Activated CD4-positive, alpha-beta T cell treated with anti-CD3 and anti-CD28 coated beads for 36 hours (primary cell): ENCODE measurements at regions of chr2 and their contacts with region 1.

Region 1: GRCh38 chr2:42132966-42133641 is 36.0 kb upstream of the EML4 start:
- DNase-seq: peak; percentile 92
- ATAC-seq: peak; percentile 90
- H3K4me3 Mint-ChIP-seq: peak overlapping the region; percentile 62
- H3K27ac Mint-ChIP-seq: peak overlapping the region; percentile 92
- H3K4me1 Mint-ChIP-seq: peaks cover 82% of the 10 kb centered on the region
- H3K27me3 Mint-ChIP-seq: no peaks in the 10 kb centered on the region

Region 2: GRCh38 chr2:41896186-41896846 is 236.8 kb before region 1 on chr2:
- CTCF ChIA-PET with region 1: no interaction called
- POLR2A ChIA-PET with region 1: no interaction called
- intact Hi-C with region 1: no loop called
- DNase-seq: peak; percentile 17
- ATAC-seq: peak; percentile 33
- H3K4me3 Mint-ChIP-seq: no peak overlapping the region
- H3K27ac Mint-ChIP-seq: no peak overlapping the region
- H3K4me1 Mint-ChIP-seq: no peaks in the 10 kb centered on the region
- H3K27me3 Mint-ChIP-seq: no peaks in the 10 kb centered on the region

Region 3: DNA sequence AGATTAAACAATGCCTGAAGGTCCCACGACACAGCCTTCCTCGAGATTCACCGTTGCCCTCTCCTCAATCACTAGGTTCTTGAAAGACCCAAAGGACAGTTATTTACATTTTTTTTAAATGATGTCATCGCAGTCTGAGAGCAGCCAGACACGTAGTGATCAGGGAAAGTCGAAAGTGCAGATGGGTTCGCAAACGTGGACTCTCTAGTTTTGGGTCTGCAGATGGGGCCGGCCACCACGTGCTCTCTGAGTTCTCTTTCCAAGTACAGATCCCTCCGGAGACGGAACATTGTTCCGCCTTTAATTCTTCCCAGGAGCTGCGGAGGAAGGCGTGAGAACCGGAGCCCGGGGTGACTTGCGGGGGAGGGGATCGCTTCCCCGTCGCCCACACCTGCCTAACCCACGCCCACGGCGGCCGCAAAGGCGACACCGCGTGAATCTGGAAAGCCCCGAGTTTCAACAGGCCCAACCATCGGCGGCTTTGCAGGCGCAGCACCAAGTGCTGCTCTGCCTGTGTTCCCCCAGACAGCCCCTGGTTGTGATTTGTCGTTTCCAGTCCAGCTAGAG is 31.0 kb before region 1 on chr2:
- CTCF ChIA-PET with region 1: interaction called, 10 read pairs
- POLR2A ChIA-PET with region 1: interaction called, 12 read pairs
- intact Hi-C with region 1: loop called (anchors 1 kb)
- DNase-seq: peak; percentile 89
- ATAC-seq: peak; percentile 40
- H3K4me3 Mint-ChIP-seq: peak overlapping the region; percentile 69
- H3K27ac Mint-ChIP-seq: peak overlapping the region; percentile 94
- H3K4me1 Mint-ChIP-seq: peaks cover 38% of the 10 kb centered on the region
- H3K27me3 Mint-ChIP-seq: no peaks in the 10 kb centered on the region

Region 4: GRCh38 chr2:42897386-42897785 is 764.3 kb after region 1 on chr2:
- CTCF ChIA-PET with region 1: no interaction called
- POLR2A ChIA-PET with region 1: interaction called, 12 read pairs
- intact Hi-C with region 1: no loop called
- DNase-seq: no peak
- ATAC-seq: no peak
- H3K4me3 Mint-ChIP-seq: no peak overlapping the region
- H3K27ac Mint-ChIP-seq: no peak overlapping the region
- H3K4me1 Mint-ChIP-seq: peaks cover 4% of the 10 kb centered on the region
- H3K27me3 Mint-ChIP-seq: no peaks in the 10 kb centered on the region